IMR-90 (cell line): ENCODE measurements at regions of chr6 and their contacts with region 1.

Region 1: GRCh38 chr6:75532515-75532914 is 38.9 kb upstream of the FILIP1 start:
- DNase-seq: peak; percentile 15
- ATAC-seq: no peak; the same call in 1 of the 2 replicates
- H3K4me3 ChIP-seq: no peak overlapping the region
- H3K27ac ChIP-seq: no peak overlapping the region
- H3K4me1 ChIP-seq: peaks cover 6% of the 10 kb centered on the region
- H3K27me3 ChIP-seq: no peaks in the 10 kb centered on the region; the same call in 1 of the 2 replicates
- CTCF ChIP-seq: no peak
- POLR2A ChIP-seq: no peak
- RAD21 ChIP-seq: no peak

Region 2: GRCh38 chr6:75266716-75267291 is 265.7 kb before region 1 on chr6:
- CTCF ChIA-PET with region 1: interaction called, 3 read pairs
- POLR2A ChIA-PET with region 1: no interaction called
- dilution Hi-C with region 1: no loop called
- in situ Hi-C with region 1: loop called (anchors 10 kb)
- intact Hi-C with region 1: no loop called
- DNase-seq: peak; percentile 76
- ATAC-seq: peak; percentile 67
- H3K4me3 ChIP-seq: no peak overlapping the region
- H3K27ac ChIP-seq: no peak overlapping the region
- H3K4me1 ChIP-seq: peaks cover 11% of the 10 kb centered on the region
- H3K27me3 ChIP-seq: no peaks in the 10 kb centered on the region
- CTCF ChIP-seq: peak; percentile 83
- POLR2A ChIP-seq: no peak
- RAD21 ChIP-seq: peak; percentile 85

Region 3: DNA sequence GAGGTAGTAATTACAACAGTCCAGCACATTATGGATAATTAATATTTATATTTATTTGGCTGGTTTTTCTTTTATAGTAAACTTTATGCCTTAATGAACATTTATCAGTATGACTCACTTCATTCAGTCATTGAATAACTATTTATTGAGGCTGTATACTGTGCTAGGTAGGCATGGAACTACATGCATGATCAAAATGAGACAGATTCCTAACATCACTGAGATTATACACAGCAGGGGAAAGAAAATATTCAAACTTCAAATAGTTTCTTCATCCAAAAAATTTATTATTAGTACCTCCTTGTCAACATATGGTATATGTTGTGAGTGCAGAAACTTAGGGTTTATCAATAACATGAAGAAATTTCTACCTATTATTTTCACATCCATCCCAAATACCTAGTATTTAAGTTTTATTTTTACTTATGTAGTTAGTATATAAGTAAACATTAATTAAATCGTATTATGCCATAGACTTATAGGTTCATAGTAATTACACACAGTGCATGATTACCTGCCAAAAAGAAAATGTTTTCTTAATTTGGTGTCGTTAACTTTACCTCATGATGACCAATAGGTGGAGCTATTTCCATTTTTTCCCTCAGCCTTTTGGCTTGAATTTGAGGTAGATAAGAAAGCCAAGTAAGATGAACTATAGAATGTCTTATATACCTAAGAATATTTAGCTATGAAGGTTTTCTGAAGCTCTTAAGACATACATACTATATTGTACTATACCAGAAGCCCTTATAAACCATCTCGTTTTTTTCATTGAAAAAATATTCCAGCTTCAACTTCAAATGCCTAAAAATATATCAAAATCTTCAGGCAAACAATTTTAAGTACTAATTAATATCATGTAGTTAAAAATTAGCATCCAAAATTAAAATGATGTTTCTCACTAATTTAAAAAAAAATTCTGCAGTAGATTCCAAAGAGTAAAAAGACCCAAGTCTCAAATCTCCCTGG is 235.4 kb before region 1 on chr6:
- CTCF ChIA-PET with region 1: interaction called, 3 read pairs
- POLR2A ChIA-PET with region 1: interaction called, 4 read pairs
- dilution Hi-C with region 1: no loop called
- in situ Hi-C with region 1: loop called (anchors 5 kb)
- intact Hi-C with region 1: no loop called
- DNase-seq: peak; percentile 71
- ATAC-seq: peak; percentile 53; the same call in 1 of the 2 replicates
- H3K4me3 ChIP-seq: no peak overlapping the region
- H3K27ac ChIP-seq: no peak overlapping the region
- H3K4me1 ChIP-seq: peaks cover 2% of the 10 kb centered on the region; the same call in 1 of the 2 replicates
- H3K27me3 ChIP-seq: no peaks in the 10 kb centered on the region
- CTCF ChIP-seq: peak; percentile 80
- POLR2A ChIP-seq: no peak
- RAD21 ChIP-seq: peak; percentile 85

Region 4: DNA sequence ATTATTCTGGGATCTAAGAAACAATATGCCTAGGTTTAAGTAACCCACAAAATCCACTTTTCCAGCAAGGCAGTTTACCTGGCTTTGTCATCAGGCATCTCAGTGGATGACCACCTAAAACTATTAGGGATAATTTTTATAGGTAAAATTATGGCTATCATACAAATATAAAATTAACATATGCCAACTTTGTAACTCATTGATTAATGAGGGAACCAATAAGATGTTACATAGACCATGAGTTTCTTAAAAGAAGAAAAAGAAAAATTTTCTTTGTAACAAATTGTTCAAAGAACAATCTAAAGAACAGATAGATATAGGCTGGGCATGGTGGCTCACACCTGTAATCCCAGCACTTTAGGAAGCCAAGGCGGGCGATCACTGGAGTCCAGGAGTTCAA is 10.8 kb after region 1 on chr6:
- CTCF ChIA-PET with region 1: no interaction called
- POLR2A ChIA-PET with region 1: no interaction called
- dilution Hi-C with region 1: no loop called
- in situ Hi-C with region 1: no loop called
- intact Hi-C with region 1: loop called (anchors 1 kb)
- DNase-seq: no peak
- ATAC-seq: no peak
- H3K4me3 ChIP-seq: no peak overlapping the region
- H3K27ac ChIP-seq: no peak overlapping the region
- H3K4me1 ChIP-seq: no peaks in the 10 kb centered on the region; the same call in none of the 2 replicates
- H3K27me3 ChIP-seq: no peaks in the 10 kb centered on the region
- CTCF ChIP-seq: no peak
- POLR2A ChIP-seq: no peak
- RAD21 ChIP-seq: no peak